Posterior cingulate gyrus (tissue), 11 donors: ENCODE measurements at regions of chr17 and their contacts with region 1.

Region 1: GRCh38 chr17:42720996-42721583 is 23.8 kb downstream of the EZH1 start:
- DNase-seq: peak in 1 of 10 donors; percentile 33

Region 2: GRCh38 chr17:42698736-42699414 is 22.2 kb before region 1 on chr17:
- intact Hi-C with region 1: no loop called
- DNase-seq: peak in 1 of 10 donors; percentile 49

Region 3: DNA sequence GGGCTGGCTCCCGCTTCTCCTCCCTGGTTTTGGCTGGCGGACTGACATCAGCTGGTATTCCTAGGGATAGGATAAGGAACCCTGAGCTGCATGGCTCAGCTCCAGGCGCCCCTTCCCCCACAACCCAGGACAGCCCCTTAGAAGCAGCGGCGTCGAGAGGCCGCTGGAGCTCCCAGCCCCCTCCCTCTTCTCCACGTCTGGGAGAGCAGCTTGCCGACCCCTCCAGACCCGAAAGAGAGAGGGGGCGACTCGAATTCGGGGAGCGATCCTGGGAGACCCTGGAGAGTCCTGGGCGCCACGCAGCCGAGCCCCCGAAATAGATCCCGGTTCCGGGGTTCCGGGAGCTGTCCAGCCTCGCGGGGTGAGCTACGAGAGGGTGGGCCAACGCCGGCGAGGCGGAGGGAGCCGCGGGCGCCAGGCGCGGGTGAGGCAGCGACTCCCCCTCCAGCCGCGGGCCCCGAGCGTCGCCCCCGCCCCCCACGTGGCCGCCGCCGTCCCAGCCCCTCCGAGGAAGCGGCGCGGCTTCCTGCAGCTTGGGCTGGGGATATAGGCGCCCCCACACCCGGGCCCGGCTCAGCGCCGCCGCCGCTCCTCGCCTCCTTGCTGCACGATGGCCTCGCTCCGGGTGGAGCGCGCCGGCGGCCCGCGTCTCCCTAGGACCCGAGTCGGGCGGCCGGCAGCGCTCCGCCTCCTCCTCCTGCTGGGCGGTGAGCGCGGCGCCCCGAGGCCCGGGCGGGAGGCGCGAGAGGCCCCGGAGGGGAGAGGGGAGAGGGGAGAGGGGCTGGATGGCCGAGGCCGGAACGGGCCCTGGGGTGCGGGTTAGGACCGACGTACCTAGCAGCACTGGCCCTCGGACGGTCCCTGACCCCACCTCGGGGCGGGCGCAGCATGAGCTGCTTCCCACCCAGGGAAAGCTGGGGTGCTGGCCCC is 39.8 kb after region 1 on chr17 and contains the start of gene RAMP2:
- intact Hi-C with region 1: loop called (anchors 1 kb)
- DNase-seq: peak in 2 of 10 donors; percentile 76 to 85

Region 4: DNA sequence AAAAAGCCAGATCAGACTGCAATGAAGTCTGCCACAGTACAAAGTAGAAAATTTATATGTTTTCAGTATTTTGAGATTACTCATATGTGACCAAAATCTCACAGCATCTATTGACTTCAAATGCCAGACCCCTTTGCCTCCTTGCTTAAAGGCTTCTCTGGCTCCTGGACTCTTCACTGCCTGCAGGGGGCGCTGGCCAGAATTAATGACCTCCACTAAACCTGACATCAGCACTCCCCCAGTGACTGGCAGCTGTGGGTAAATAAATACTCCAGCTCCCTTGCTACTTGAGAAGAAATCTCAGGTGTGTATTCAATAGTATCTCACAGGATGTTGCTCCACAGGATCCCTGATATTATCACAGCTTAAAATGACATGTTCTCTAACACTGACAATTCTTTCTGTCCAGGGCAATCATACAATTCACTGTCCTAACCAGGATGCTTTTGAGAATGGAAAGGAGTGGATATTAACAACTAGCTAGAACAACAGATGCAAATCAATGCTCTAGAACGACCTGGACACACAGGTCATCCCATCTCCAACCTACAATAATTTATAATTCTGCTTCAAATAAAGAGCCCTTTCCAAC is 99.0 kb after region 1 on chr17:
- intact Hi-C with region 1: loop called (anchors 10 kb)
- DNase-seq: no peak